Activated CD4-positive, alpha-beta memory T cell treated with anti-CD3 and anti-CD28 coated beads for 36 hours (primary cell): ENCODE measurements at regions of chr21 and their contacts with region 1.

Region 1: DNA sequence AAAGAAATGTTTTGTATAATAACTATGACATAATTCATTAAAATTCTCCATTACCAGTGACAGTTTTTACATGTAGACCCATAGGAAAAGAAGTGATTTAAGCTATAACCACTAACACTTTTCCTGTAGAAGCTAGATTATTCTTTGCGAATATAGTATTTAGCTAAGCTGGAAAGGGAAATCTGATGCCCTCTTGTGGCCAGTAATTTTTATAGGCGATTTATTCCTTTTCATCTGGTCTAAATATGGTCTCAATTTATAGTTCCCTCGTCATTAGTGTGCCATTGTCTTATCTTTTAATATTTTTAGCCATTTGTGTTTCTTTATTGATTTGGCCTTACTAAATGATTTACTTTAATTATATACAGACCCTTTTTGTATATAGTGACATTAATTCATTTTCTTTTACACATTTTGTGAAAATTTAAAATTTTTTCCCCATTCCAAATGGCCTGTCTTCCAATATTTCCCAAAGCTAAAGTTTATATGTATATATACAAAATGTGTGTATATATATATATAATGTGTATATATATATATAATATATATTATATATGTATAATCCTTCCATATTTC is 26.7 kb downstream of the BTG3 start:
- DNase-seq: no peak
- H3K4me3 Mint-ChIP-seq: no peak overlapping the region
- H3K27ac Mint-ChIP-seq: no peak overlapping the region
- H3K4me1 Mint-ChIP-seq: no peaks in the 10 kb centered on the region
- H3K27me3 Mint-ChIP-seq: peaks cover 1% of the 10 kb centered on the region

Region 2: DNA sequence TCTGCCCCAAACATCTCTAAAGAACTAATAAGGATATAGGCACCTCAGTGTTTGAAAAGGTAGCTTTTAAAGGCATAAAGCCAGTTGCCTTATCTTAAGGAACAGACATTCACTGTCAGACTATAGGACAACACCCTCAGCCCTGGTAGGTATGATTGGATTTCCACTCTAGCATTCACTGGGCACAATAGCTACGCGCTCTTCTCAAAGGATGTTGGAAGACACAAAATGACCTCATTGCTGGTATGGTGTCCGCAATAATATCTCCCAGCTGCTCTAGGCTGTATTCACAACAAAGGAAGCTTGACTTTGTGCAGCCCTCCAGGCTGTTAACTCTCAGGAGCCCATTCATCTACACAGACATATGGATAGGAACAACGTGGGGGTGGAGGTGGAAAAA is 192.6 kb before region 1 on chr21:
- CTCF ChIA-PET with region 1: interaction called, 145 read pairs
- POLR2A ChIA-PET with region 1: no interaction called
- intact Hi-C with region 1: no loop called
- DNase-seq: no peak
- H3K4me3 Mint-ChIP-seq: no peak overlapping the region
- H3K27ac Mint-ChIP-seq: no peak overlapping the region
- H3K4me1 Mint-ChIP-seq: no peaks in the 10 kb centered on the region
- H3K27me3 Mint-ChIP-seq: peaks cover under 1% of the 10 kb centered on the region

Region 3: GRCh38 chr21:17512253-17513213 is 73.4 kb before region 1 on chr21 and contains the start of gene CXADR:
- CTCF ChIA-PET with region 1: interaction called, 8 read pairs
- POLR2A ChIA-PET with region 1: no interaction called
- intact Hi-C with region 1: loop called (anchors 5 kb)
- DNase-seq: peak; percentile 83
- H3K4me3 Mint-ChIP-seq: peak within 1 kb of the TSS; percentile 77
- H3K27ac Mint-ChIP-seq: no peak within 1 kb of the TSS
- H3K4me1 Mint-ChIP-seq: peaks cover 14% of the 10 kb centered on the region
- H3K27me3 Mint-ChIP-seq: peaks cover 14% of the 10 kb centered on the region
- total RNA-seq, gene CXADR: 0.29 to 0.75 TPM

Region 4: DNA sequence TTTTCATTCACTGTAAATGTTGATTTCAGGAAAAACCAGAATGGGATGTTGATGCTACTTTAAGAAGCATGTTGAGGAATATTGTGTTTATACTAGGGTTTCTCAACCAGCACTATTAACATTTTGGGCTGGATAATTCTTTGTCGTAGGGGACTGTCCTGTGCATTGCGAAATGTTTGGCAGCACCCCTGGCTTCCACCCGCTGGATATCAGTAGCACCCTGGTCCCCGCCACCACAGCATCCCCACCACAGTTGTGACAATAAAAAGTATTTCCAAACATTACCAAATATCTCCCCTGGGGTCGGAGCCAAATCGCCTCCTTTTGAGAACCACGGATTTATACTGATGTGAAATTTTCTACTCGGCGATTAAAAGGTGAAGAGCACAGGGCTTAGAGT is 15.2 kb before region 1 on chr21:
- CTCF ChIA-PET with region 1: no interaction called
- POLR2A ChIA-PET with region 1: no interaction called
- intact Hi-C with region 1: no loop called
- DNase-seq: no peak
- H3K4me3 Mint-ChIP-seq: no peak overlapping the region
- H3K27ac Mint-ChIP-seq: no peak overlapping the region
- H3K4me1 Mint-ChIP-seq: no peaks in the 10 kb centered on the region
- H3K27me3 Mint-ChIP-seq: peaks cover 4% of the 10 kb centered on the region